HCT116 (cell line): ENCODE measurements at regions of chr17 and their contacts with region 1.

Region 1: DNA sequence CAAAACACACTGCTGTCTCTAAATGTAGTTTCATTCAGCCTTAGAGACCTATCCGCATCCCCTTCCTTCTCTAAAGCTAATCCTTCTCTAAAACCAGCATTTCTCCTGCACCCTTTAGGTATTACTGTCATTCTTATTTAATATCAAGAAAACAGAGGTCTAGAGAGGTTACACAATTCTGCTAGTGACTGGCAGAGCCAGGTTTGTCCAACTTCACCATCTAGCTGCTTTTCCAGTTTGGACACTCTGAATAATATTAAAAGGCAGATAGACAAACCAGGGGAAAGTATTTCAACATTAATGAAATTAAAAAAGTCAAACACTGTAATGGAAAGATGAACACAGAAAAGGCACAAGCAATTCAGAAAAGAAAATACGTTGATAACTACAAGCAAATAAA is 56.1 kb downstream of the ZNF652 start:
- DNase-seq: no peak
- ATAC-seq: no peak
- H3K4me3 ChIP-seq: no peak overlapping the region
- H3K27ac ChIP-seq: no peak overlapping the region
- H3K4me1 ChIP-seq: no peaks in the 10 kb centered on the region
- H3K27me3 ChIP-seq: no peaks in the 10 kb centered on the region
- CTCF ChIP-seq: no peak
- POLR2A ChIP-seq: no peak
- RAD21 ChIP-seq: no peak

Region 2: GRCh38 chr17:49290690-49291359 is 15.1 kb before region 1 on chr17:
- CTCF ChIA-PET with region 1: interaction called, 10 read pairs
- POLR2A ChIA-PET with region 1: no interaction called
- RAD21 ChIA-PET with region 1: no interaction called
- intact Hi-C with region 1: no loop called
- DNase-seq: peak; percentile 8
- ATAC-seq: peak; percentile 80
- H3K4me3 ChIP-seq: no peak overlapping the region
- H3K27ac ChIP-seq: no peak overlapping the region
- H3K4me1 ChIP-seq: no peaks in the 10 kb centered on the region
- H3K27me3 ChIP-seq: no peaks in the 10 kb centered on the region
- CTCF ChIP-seq: peak; percentile 65 to 88 (median 83); a peak in 5 of 6 replicates
- POLR2A ChIP-seq: no peak
- RAD21 ChIP-seq: peak; percentile 75

Region 3: GRCh38 chr17:49318438-49318965 is 12.6 kb after region 1 on chr17:
- CTCF ChIA-PET with region 1: no interaction called
- POLR2A ChIA-PET with region 1: no interaction called
- RAD21 ChIA-PET with region 1: no interaction called
- intact Hi-C with region 1: no loop called
- DNase-seq: no peak
- ATAC-seq: no peak
- H3K4me3 ChIP-seq: no peak overlapping the region
- H3K27ac ChIP-seq: no peak overlapping the region
- H3K4me1 ChIP-seq: peaks cover 0 to 13% of the 10 kb centered on the region in 2 experiments; a peak in 2 of 4 replicates
- H3K27me3 ChIP-seq: no peaks in the 10 kb centered on the region
- CTCF ChIP-seq: no peak
- POLR2A ChIP-seq: no peak
- RAD21 ChIP-seq: no peak

Region 4: DNA sequence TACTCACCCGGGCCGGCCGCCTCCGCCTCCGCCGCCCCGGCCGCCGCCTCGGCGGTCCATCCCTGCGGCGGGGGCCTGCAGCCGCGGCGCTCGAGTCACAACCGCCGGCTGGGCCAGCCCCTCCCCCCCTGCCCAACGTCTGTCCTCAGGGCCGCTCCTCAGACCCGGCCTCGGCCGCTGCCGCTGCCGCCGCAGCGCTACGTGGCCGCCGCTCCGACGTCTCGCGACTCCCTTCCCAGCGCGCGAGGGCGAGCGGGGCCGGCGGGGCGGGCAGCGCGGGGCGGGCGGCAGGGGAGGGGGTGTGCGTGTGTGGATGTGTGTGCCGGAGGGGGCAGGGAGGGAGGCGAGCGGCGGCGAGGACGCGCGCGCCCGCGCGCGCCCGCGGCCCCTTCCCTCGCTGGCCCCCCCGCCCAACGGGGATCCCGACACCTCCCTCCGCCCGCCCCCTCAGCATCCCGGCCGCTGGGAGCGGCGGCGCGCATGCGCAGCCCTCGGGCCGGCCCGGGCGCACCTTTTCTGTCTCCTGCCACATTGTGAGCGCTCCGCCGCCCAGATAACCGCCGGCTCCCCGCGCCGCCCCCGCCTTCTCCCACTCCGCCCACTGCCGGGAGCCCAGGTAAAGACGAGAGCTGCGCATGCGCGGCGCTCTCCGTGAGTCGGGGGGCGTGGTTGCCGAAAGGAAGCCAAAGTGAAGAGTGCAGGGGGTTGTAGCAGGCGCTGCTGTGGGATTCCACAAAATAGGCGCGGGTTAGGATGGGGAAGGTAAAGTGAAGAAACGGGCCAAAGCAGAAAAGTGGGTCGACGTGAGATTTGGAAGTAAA is 56.2 kb after region 1 on chr17 and contains the start of gene ZNF652:
- CTCF ChIA-PET with region 1: no interaction called
- POLR2A ChIA-PET with region 1: no interaction called
- RAD21 ChIA-PET with region 1: interaction called in 1 of 2 experiments, 11 read pairs
- intact Hi-C with region 1: no loop called
- DNase-seq: peak; percentile 93
- ATAC-seq: peak; percentile 86
- H3K4me3 ChIP-seq: peak within 1 kb of the TSS; percentile 81 to 86
- H3K27ac ChIP-seq: peak within 1 kb of the TSS; percentile 92
- H3K4me1 ChIP-seq: peaks cover 18 to 24% of the 10 kb centered on the region in 2 experiments
- H3K27me3 ChIP-seq: no peaks in the 10 kb centered on the region
- CTCF ChIP-seq: no peak
- POLR2A ChIP-seq: peak; percentile 35
- RAD21 ChIP-seq: no peak
- total RNA-seq, gene ZNF652: 27.8 TPM